Esophagus squamous epithelium (tissue), 5 donors: ENCODE measurements at regions of chr2 and their contacts with region 1.

Region 1: GRCh38 chr2:158903711-158904443 is 64.6 kb upstream of the TANC1 start:
- DNase-seq: no peak
- H3K4me3 ChIP-seq: no peak overlapping the region
- H3K27ac ChIP-seq: no peak overlapping the region
- H3K4me1 ChIP-seq: peaks cover 0 to 4% (median 0%) of the 10 kb centered on the region in 3 donors
- H3K27me3 ChIP-seq: no peaks in the 10 kb centered on the region
- CTCF ChIP-seq: no peak
- POLR2A ChIP-seq: no peak

Region 2: GRCh38 chr2:158755310-158756087 is 148.4 kb before region 1 on chr2:
- intact Hi-C with region 1: no loop called
- DNase-seq: no peak
- H3K4me3 ChIP-seq: no peak overlapping the region
- H3K27ac ChIP-seq: no peak overlapping the region
- H3K4me1 ChIP-seq: peaks cover 10 to 43% (median 12%) of the 10 kb centered on the region in 3 donors
- H3K27me3 ChIP-seq: no peaks in the 10 kb centered on the region
- CTCF ChIP-seq: peak in 2 of 6 experiments; percentile 27 to 52
- POLR2A ChIP-seq: no peak

Region 3: GRCh38 chr2:159118115-159118858 is 214.4 kb after region 1 on chr2:
- intact Hi-C with region 1: loop called (anchors 5 kb)
- DNase-seq: peak; percentile 22
- H3K4me3 ChIP-seq: no peak overlapping the region
- H3K27ac ChIP-seq: peak overlapping the region; percentile 11 to 23 (median 18)
- H3K4me1 ChIP-seq: peaks cover 0 to 31% (median 6%) of the 10 kb centered on the region in 3 donors
- H3K27me3 ChIP-seq: no peaks in the 10 kb centered on the region
- CTCF ChIP-seq: peak; percentile 84 to 97 (median 94)
- POLR2A ChIP-seq: no peak